ENCODE measurements at regions of chr6 and their contacts with region 1.

Region 1: GRCh38 chr6:17589406-17590096 is 10.6 kb upstream of the FAM8A1 start:
- DNase-seq: peak; percentile 40
- H3K4me3 Mint-ChIP-seq: no peak overlapping the region
- H3K27ac Mint-ChIP-seq: peak overlapping the region; percentile 72
- H3K4me1 Mint-ChIP-seq: peaks cover 30% of the 10 kb centered on the region
- H3K27me3 Mint-ChIP-seq: no peaks in the 10 kb centered on the region

Region 2: DNA sequence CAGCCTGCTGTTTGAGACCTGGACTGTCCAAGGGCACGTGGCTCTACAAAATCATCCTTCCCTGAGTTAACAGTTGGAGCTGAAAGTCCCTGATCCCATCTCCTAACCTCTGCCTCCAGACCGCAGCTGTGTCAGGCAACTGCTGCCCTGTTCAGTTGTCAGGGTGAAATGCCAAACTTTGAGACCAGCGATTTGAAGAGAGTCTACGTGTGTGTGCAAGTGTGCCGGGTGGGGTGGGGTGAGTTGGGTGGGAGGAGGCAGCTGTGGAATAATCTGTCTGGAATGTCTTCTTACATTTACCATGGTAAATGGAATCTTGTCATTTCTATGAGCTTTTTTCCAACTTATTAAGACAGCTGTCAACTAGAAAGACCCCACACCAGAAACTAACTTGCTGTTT is 70.4 kb before region 1 on chr6:
- CTCF ChIA-PET with region 1: no interaction called
- POLR2A ChIA-PET with region 1: no interaction called
- DNase-seq: no peak
- H3K4me3 Mint-ChIP-seq: no peak overlapping the region
- H3K27ac Mint-ChIP-seq: no peak overlapping the region
- H3K4me1 Mint-ChIP-seq: no peaks in the 10 kb centered on the region
- H3K27me3 Mint-ChIP-seq: peaks cover 5% of the 10 kb centered on the region

Region 3: DNA sequence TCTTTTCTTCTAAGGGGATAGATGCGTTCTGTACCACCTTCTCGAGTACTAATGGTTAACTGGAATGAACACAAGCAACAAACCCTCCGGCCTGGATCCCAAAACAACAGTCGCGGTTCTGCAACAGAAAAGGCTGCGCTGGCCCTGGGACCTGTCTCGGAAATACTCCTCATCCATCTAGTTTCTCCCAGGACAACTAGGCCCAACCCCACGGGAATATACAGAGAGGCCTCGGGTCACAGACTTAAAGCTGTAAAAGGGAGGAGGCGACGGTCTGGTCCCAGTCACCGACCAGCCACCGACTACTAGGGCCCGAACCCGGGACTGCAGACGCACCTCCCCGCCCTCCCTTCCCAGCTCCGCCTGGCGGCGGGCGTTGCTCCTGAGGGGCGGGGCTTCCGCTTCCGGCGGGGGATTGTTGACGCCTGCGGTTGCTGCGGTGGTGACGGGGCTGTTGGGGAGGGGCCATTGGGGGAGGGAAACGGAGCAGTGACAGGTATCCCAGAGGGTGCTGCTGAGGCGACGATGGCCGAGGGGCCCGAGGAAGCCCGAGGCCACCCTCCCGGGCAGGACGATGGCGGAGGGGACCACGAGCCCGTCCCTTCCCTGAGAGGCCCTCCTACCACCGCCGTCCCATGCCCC is 10.5 kb after region 1 on chr6 and contains the start of gene FAM8A1:
- CTCF ChIA-PET with region 1: interaction called, 12 read pairs
- POLR2A ChIA-PET with region 1: no interaction called
- DNase-seq: peak; percentile 95
- H3K4me3 Mint-ChIP-seq: peak within 1 kb of the TSS; percentile 80
- H3K27ac Mint-ChIP-seq: peak within 1 kb of the TSS; percentile 90
- H3K4me1 Mint-ChIP-seq: peaks cover 37% of the 10 kb centered on the region
- H3K27me3 Mint-ChIP-seq: no peaks in the 10 kb centered on the region
- total RNA-seq, gene FAM8A1: 10.7 to 11.6 TPM

Region 4: GRCh38 chr6:17610835-17611234 is 21.3 kb after region 1 on chr6:
- CTCF ChIA-PET with region 1: no interaction called
- POLR2A ChIA-PET with region 1: no interaction called
- DNase-seq: no peak
- H3K4me3 Mint-ChIP-seq: no peak overlapping the region
- H3K27ac Mint-ChIP-seq: no peak overlapping the region
- H3K4me1 Mint-ChIP-seq: no peaks in the 10 kb centered on the region
- H3K27me3 Mint-ChIP-seq: no peaks in the 10 kb centered on the region